Gastrocnemius medialis (tissue), 4 donors: ENCODE measurements at regions of chr9 and their contacts with region 1.

Region 1: DNA sequence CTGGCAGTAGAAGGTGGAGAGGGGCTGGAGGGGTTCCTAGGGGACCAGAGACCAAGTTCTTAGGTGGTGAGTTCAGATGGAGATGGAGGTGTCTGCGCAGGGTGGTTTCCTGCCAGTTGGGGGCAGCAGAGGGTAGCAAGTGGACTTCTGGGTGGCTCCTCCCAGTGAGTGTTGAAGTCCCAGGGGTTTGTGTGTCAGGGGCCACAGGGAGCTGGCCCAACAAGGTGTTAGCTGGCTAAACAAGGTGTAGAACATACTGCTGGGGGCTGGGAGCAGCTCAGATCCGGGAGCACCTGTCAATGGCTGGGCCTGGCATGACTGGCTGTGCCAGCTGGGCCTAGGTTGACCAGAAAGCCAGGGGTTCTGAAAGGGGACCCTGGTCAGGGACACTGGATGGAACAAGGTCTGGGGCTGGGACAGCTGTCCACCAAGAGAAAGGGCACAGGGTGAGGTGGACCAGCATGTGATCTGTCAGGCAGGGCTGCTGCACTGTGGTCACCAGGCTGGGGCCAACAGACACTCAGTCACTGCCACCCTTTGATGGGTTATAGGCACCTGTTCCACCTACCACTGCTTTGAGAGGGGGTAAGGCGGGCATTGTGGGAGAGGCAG is 35.6 kb downstream of the DAB2IP start:
- DNase-seq: peak; percentile 57 to 80
- ATAC-seq: peak; percentile 77 to 86
- H3K4me3 ChIP-seq: no peak overlapping the region
- H3K27ac ChIP-seq: peak overlapping the region; percentile 65 to 69 (median 67)
- H3K4me1 ChIP-seq: peaks cover 20 to 23% of the 10 kb centered on the region in 2 donors
- H3K27me3 ChIP-seq: no peaks in the 10 kb centered on the region
- CTCF ChIP-seq: peak; percentile 80 to 90 (median 87)
- POLR2A ChIP-seq: no peak

Region 2: GRCh38 chr9:121445981-121446380 is 241.1 kb before region 1 on chr9:
- in situ Hi-C with region 1: no loop called
- intact Hi-C with region 1: no loop called
- DNase-seq: no peak
- ATAC-seq: no peak
- H3K4me3 ChIP-seq: no peak overlapping the region
- H3K27ac ChIP-seq: no peak overlapping the region
- H3K4me1 ChIP-seq: peaks cover 0 to 3% of the 10 kb centered on the region in 2 donors
- H3K27me3 ChIP-seq: no peaks in the 10 kb centered on the region
- CTCF ChIP-seq: no peak
- POLR2A ChIP-seq: no peak

Region 3: GRCh38 chr9:121640076-121640475 is 47.0 kb before region 1 on chr9:
- in situ Hi-C with region 1: no loop called
- intact Hi-C with region 1: loop called (anchors 2 kb)
- DNase-seq: peak in 1 of 2 donors; percentile 71
- ATAC-seq: peak; percentile 58 to 68
- H3K4me3 ChIP-seq: no peak overlapping the region
- H3K27ac ChIP-seq: peak overlapping the region; percentile 47 to 69 (median 60)
- H3K4me1 ChIP-seq: peaks cover 68 to 72% of the 10 kb centered on the region in 2 donors
- H3K27me3 ChIP-seq: no peaks in the 10 kb centered on the region
- CTCF ChIP-seq: peak; percentile 62 to 82 (median 76)
- POLR2A ChIP-seq: no peak

Region 4: DNA sequence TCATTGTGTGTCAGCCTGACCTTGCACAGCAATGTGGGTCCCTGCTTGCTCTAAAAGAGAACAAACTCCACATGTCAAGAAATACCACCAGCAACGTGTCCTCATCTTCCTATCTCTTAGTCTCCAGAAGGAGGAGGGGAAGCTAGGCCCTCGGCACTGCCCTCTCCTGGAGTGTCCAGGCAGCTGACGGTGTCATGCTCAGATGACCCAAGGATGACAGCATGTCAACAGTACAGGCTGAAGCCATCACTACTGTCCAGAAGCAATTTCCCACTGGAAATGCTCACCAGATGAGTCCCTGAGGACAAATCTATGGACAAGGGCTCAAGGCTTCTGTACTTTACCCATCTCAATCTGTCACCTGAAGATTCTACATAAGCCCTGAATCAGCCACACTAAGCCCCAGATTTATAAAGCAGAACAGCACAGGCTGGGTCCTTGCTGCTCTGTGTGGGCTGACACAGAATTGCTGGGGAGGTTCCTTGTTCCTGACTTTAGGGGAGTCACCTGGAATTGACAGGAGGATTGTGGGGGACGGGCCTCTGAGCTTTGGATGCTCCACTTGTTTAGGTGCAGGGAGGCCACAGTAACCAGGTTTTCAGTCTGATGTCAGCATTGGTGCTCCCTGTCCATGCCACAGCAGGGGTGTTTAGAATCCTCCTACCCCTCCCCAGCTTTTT is 174.6 kb after region 1 on chr9:
- in situ Hi-C with region 1: no loop called
- intact Hi-C with region 1: loop called (anchors 5 kb)
- DNase-seq: peak; percentile 40 to 70
- ATAC-seq: peak; percentile 73 to 91
- H3K4me3 ChIP-seq: no peak overlapping the region
- H3K27ac ChIP-seq: peak overlapping the region in 2 of 4 donors; percentile 2 to 39
- H3K4me1 ChIP-seq: peaks cover 3 to 6% of the 10 kb centered on the region in 2 donors
- H3K27me3 ChIP-seq: no peaks in the 10 kb centered on the region
- CTCF ChIP-seq: peak; percentile 29 to 66 (median 55)
- POLR2A ChIP-seq: no peak